ENCODE measurements at regions of chr19 and their contacts with region 1.

Region 1: DNA sequence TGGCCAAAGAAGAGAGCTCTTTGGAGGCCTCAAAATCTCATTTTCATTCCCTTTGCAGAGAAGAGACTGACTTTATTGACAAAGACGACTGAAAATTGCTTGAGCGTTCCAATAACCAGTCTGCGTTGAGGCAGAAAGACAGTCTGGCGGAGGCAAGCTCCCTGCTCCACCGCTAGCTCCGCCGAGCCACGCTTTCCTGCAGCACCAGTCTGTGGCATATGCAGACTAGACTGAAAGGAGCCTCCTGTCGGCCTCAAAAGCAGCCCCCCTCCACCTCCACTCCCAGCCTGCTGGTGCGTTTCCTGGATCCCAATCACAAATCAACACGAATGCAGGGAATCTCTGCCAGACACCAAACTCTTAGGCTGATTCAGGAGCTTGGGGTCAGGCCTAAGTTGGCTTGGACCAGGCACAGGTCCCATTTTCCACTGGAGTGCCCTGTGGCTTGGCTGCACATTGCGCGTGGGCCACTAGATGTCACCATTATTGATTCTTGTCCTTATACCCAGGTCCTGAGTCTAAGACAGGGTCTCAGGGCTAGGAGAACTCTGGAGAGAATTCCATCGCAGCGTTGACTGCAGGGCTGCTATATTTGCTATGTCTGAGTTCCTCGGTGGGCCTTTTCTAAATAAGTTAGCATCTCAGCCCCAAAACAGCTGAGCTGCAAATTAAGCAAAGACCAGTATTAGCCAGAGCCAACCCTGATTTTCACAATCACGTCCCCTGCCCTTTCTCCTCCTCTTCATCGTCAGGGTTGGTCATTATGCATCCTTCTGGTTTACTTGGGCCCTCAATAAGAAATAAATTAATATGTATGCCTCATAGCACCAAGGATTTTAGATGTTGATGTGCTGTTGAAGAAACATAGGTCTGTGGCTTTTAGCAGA is 5.2 kb upstream of the ZNF507 start:
- H3K4me3 ChIP-seq: no peak overlapping the region
- H3K27ac ChIP-seq: no peak overlapping the region
- H3K4me1 ChIP-seq: peaks cover 7% of the 10 kb centered on the region
- CTCF ChIP-seq: peak; percentile 84

Region 2: GRCh38 chr19:32129141-32129540 is 211.1 kb before region 1 on chr19:
- CTCF ChIA-PET with region 1: no interaction called
- POLR2A ChIA-PET with region 1: no interaction called
- H3K4me3 ChIP-seq: no peak overlapping the region
- H3K27ac ChIP-seq: no peak overlapping the region
- H3K4me1 ChIP-seq: peaks cover 5% of the 10 kb centered on the region; the same call in 1 of the 2 replicates
- CTCF ChIP-seq: no peak

Region 3: GRCh38 chr19:32318880-32319520 is 21.2 kb before region 1 on chr19:
- CTCF ChIA-PET with region 1: interaction called, 12 read pairs
- POLR2A ChIA-PET with region 1: interaction called, 3 read pairs
- H3K4me3 ChIP-seq: no peak overlapping the region
- H3K27ac ChIP-seq: no peak overlapping the region
- H3K4me1 ChIP-seq: no peaks in the 10 kb centered on the region
- CTCF ChIP-seq: peak; percentile 38; the same call in 1 of the 2 replicates

Region 4: GRCh38 chr19:32357720-32358119 is 17.5 kb after region 1 on chr19:
- CTCF ChIA-PET with region 1: interaction called, 27 read pairs
- POLR2A ChIA-PET with region 1: interaction called, 6 read pairs
- H3K4me3 ChIP-seq: no peak overlapping the region
- H3K27ac ChIP-seq: no peak overlapping the region
- H3K4me1 ChIP-seq: no peaks in the 10 kb centered on the region; the same call in 1 of the 2 replicates
- CTCF ChIP-seq: no peak

Region 5: GRCh38 chr19:32373585-32374295 is 33.5 kb after region 1 on chr19:
- CTCF ChIA-PET with region 1: interaction called, 17 read pairs
- POLR2A ChIA-PET with region 1: interaction called, 8 read pairs
- H3K4me3 ChIP-seq: no peak overlapping the region
- H3K27ac ChIP-seq: peak overlapping the region; percentile 47
- H3K4me1 ChIP-seq: peaks cover 18% of the 10 kb centered on the region
- CTCF ChIP-seq: no peak

Region 6: GRCh38 chr19:32570081-32570785 is 230.0 kb after region 1 on chr19:
- CTCF ChIA-PET with region 1: interaction called, 19 read pairs
- POLR2A ChIA-PET with region 1: no interaction called
- H3K4me3 ChIP-seq: no peak overlapping the region
- H3K27ac ChIP-seq: no peak overlapping the region
- H3K4me1 ChIP-seq: peaks cover 2% of the 10 kb centered on the region; the same call in 1 of the 2 replicates
- CTCF ChIP-seq: peak; percentile 98